B cell (primary cell): ENCODE measurements at regions of chr17 and their contacts with region 1.

Region 1: GRCh38 chr17:49390548-49391324 is 23.9 kb downstream of the PHB1 start:
- DNase-seq: peak; percentile 68
- ATAC-seq: peak; percentile 46
- H3K4me3 ChIP-seq: peak overlapping the region in 2 of 5 experiments; percentile 8 to 49
- H3K4me3 Mint-ChIP-seq: peak overlapping the region; percentile 89
- H3K27ac ChIP-seq: peak overlapping the region; percentile 84 to 92
- H3K27ac Mint-ChIP-seq: peak overlapping the region; percentile 99
- H3K4me1 ChIP-seq: peaks cover 69 to 78% of the 10 kb centered on the region in 2 donors
- H3K4me1 Mint-ChIP-seq: peaks cover 65% of the 10 kb centered on the region
- H3K27me3 ChIP-seq: no peaks in the 10 kb centered on the region
- H3K27me3 Mint-ChIP-seq: no peaks in the 10 kb centered on the region
- CTCF ChIP-seq: no peak

Region 2: DNA sequence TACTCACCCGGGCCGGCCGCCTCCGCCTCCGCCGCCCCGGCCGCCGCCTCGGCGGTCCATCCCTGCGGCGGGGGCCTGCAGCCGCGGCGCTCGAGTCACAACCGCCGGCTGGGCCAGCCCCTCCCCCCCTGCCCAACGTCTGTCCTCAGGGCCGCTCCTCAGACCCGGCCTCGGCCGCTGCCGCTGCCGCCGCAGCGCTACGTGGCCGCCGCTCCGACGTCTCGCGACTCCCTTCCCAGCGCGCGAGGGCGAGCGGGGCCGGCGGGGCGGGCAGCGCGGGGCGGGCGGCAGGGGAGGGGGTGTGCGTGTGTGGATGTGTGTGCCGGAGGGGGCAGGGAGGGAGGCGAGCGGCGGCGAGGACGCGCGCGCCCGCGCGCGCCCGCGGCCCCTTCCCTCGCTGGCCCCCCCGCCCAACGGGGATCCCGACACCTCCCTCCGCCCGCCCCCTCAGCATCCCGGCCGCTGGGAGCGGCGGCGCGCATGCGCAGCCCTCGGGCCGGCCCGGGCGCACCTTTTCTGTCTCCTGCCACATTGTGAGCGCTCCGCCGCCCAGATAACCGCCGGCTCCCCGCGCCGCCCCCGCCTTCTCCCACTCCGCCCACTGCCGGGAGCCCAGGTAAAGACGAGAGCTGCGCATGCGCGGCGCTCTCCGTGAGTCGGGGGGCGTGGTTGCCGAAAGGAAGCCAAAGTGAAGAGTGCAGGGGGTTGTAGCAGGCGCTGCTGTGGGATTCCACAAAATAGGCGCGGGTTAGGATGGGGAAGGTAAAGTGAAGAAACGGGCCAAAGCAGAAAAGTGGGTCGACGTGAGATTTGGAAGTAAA is 28.6 kb before region 1 on chr17 and contains the start of gene ZNF652:
- CTCF ChIA-PET with region 1: interaction called, 41 read pairs
- POLR2A ChIA-PET with region 1: interaction called, 11 read pairs
- intact Hi-C with region 1: loop called (anchors 1 kb)
- DNase-seq: peak; percentile 98
- ATAC-seq: peak; percentile 69
- H3K4me3 ChIP-seq: peak within 1 kb of the TSS; percentile 79 to 95 (median 89)
- H3K4me3 Mint-ChIP-seq: peak within 1 kb of the TSS; percentile 99
- H3K27ac ChIP-seq: peak within 1 kb of the TSS; percentile 70 to 76
- H3K27ac Mint-ChIP-seq: peak within 1 kb of the TSS; percentile 98
- H3K4me1 ChIP-seq: peaks cover 50% of the 10 kb centered on the region in 2 donors
- H3K4me1 Mint-ChIP-seq: peaks cover 62% of the 10 kb centered on the region
- H3K27me3 ChIP-seq: no peaks in the 10 kb centered on the region
- H3K27me3 Mint-ChIP-seq: no peaks in the 10 kb centered on the region
- CTCF ChIP-seq: no peak
- total RNA-seq, gene ZNF652: 82.4 and 86.2 TPM in 2 replicates

Region 3: GRCh38 chr17:49370971-49371834 is 19.5 kb before region 1 on chr17:
- CTCF ChIA-PET with region 1: interaction called, 41 read pairs
- POLR2A ChIA-PET with region 1: interaction called, 3 read pairs
- intact Hi-C with region 1: loop called (anchors 2 kb)
- DNase-seq: no peak
- ATAC-seq: no peak
- H3K4me3 ChIP-seq: no peak overlapping the region
- H3K4me3 Mint-ChIP-seq: no peak overlapping the region
- H3K27ac ChIP-seq: peak overlapping the region; percentile 2 to 52
- H3K27ac Mint-ChIP-seq: peak overlapping the region; percentile 32
- H3K4me1 ChIP-seq: peaks cover 40 to 41% of the 10 kb centered on the region in 2 donors
- H3K4me1 Mint-ChIP-seq: peaks cover 61% of the 10 kb centered on the region
- H3K27me3 ChIP-seq: no peaks in the 10 kb centered on the region
- H3K27me3 Mint-ChIP-seq: no peaks in the 10 kb centered on the region
- CTCF ChIP-seq: no peak

Region 4: GRCh38 chr17:49407981-49408501 is 17.3 kb after region 1 on chr17:
- CTCF ChIA-PET with region 1: interaction called, 43 read pairs
- POLR2A ChIA-PET with region 1: interaction called, 4 read pairs
- intact Hi-C with region 1: no loop called
- DNase-seq: peak; percentile 87
- ATAC-seq: peak; percentile 97
- H3K4me3 ChIP-seq: no peak overlapping the region
- H3K4me3 Mint-ChIP-seq: no peak overlapping the region
- H3K27ac ChIP-seq: no peak overlapping the region
- H3K27ac Mint-ChIP-seq: peak overlapping the region; percentile 28
- H3K4me1 ChIP-seq: peaks cover 24 to 33% of the 10 kb centered on the region in 2 donors
- H3K4me1 Mint-ChIP-seq: peaks cover 28% of the 10 kb centered on the region
- H3K27me3 ChIP-seq: no peaks in the 10 kb centered on the region
- H3K27me3 Mint-ChIP-seq: no peaks in the 10 kb centered on the region
- CTCF ChIP-seq: peak; percentile 99

Region 5: DNA sequence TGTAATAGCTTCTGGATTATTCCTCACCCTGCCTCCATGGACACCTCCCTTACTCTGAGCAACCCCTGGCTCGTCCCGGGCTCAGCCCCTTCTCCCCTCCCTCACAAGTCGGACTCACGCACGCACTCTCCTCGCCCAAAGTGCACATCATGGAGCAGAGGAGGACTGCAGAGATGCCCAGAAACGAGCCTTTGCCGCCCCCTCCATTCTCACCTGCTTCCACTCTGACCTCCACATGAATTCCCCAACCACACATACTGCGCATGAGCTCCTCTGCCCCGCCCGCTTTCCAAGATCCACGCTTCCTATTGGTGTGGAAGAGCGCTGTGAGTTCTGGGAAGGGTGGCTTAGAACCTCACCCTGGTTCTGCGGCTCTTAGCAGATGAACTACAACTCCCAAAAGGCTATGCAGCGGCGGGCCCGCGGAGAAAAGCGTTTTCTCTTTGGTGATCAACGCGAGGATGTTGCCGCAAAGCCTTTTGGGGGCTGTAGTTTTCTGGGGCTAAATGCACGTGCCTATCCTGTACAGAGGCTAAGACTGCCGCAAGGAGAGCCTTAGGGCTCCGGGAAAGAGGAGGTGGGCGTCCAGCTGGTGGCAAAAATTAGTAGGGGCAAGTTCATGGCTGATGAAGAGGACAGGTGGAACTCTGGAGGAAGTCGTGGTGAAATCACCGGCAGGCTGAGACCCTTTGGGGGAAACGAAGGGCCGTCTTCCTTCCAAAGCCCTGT is 24.1 kb after region 1 on chr17 and contains the start of gene PHB1:
- CTCF ChIA-PET with region 1: interaction called, 5 read pairs
- POLR2A ChIA-PET with region 1: interaction called, 4 read pairs
- intact Hi-C with region 1: loop called (anchors 2 kb)
- DNase-seq: peak; percentile 96
- ATAC-seq: peak; percentile 98
- H3K4me3 ChIP-seq: peak within 1 kb of the TSS; percentile 51 to 93 (median 75)
- H3K4me3 Mint-ChIP-seq: peak within 1 kb of the TSS; percentile 94
- H3K27ac ChIP-seq: peak within 1 kb of the TSS in 1 of 2 donors; percentile 72
- H3K27ac Mint-ChIP-seq: peak within 1 kb of the TSS; percentile 84
- H3K4me1 ChIP-seq: peaks cover 7 to 17% of the 10 kb centered on the region in 2 donors
- H3K4me1 Mint-ChIP-seq: peaks cover 22% of the 10 kb centered on the region
- H3K27me3 ChIP-seq: no peaks in the 10 kb centered on the region
- H3K27me3 Mint-ChIP-seq: no peaks in the 10 kb centered on the region
- CTCF ChIP-seq: no peak
- total RNA-seq, gene PHB1: 72.3 and 73.6 TPM in 2 replicates